ENCODE measurements at regions of chr5 and their contacts with region 1.

Region 1: GRCh38 chr5:151651997-151652645 is 34.6 kb downstream of the SPARC start:
- DNase-seq: peak; percentile 60 to 87
- H3K4me3 ChIP-seq: no peak overlapping the region
- H3K27ac ChIP-seq: no peak overlapping the region
- H3K4me1 ChIP-seq: no peaks in the 10 kb centered on the region; a peak in 1 of 7 replicates
- H3K27me3 ChIP-seq: no peaks in the 10 kb centered on the region
- CTCF ChIP-seq: peak; percentile 93 to 98 (median 97)
- EP300 ChIP-seq: no peak
- POLR2A ChIP-seq: no peak
- RAD21 ChIP-seq: peak; percentile 99 to 100

Region 2: DNA sequence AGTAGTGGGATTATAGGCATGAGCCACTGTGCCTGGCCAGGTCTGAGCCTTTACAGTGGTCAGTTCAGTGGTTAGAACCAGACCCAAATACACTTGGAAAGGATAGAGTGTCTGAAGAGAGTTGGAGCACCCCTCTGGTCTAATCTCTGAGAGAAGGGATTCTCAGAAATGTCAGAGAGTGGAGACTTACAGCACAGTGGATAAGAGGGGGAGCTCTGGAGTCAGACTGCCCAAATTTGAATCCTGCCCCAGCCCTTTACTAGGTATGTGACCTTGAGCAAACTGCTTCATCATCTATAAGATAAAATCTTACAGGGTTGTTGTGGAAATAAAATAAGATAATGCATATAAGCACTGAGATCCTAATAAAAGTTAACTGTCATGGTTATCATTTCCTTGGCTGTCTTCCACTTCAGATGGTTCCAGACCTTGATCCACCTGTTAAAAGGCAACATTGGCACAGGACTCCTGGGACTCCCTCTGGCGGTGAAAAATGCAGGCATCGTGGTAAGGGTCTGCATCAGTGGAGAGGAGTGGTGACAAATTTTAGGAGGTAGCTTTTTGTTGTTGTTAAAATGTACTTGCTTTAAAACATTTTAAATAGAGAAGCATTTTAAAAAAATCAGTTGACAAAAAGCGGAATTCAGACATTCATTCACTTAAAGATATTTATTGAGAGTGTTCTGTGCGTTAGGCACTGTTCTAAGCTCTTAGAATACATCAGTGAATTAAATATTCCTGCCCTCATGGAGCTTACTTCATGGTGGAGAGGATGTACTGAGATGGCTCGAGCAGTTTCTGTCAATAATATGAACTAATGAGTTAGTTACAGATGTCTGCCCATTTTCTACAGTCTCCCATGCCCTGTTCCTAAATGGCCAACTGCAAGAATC is 188.7 kb before region 1 on chr5:
- CTCF ChIA-PET with region 1: interaction called, 17 read pairs
- POLR2A ChIA-PET with region 1: no interaction called
- DNase-seq: peak in 1 of 2 experiments; percentile 83
- H3K4me3 ChIP-seq: no peak overlapping the region
- H3K27ac ChIP-seq: no peak overlapping the region
- H3K4me1 ChIP-seq: no peaks in the 10 kb centered on the region
- H3K27me3 ChIP-seq: no peaks in the 10 kb centered on the region
- CTCF ChIP-seq: peak; percentile 81 to 85 (median 82)
- EP300 ChIP-seq: no peak
- POLR2A ChIP-seq: no peak
- RAD21 ChIP-seq: peak; percentile 53 to 76

Region 3: GRCh38 chr5:151509231-151509630 is 142.9 kb before region 1 on chr5:
- CTCF ChIA-PET with region 1: interaction called, 21 read pairs
- POLR2A ChIA-PET with region 1: no interaction called
- DNase-seq: no peak
- H3K4me3 ChIP-seq: no peak overlapping the region
- H3K27ac ChIP-seq: no peak overlapping the region
- H3K4me1 ChIP-seq: no peaks in the 10 kb centered on the region; a peak in 1 of 7 replicates
- H3K27me3 ChIP-seq: no peaks in the 10 kb centered on the region
- CTCF ChIP-seq: no peak
- EP300 ChIP-seq: no peak
- POLR2A ChIP-seq: no peak
- RAD21 ChIP-seq: no peak

Region 4: DNA sequence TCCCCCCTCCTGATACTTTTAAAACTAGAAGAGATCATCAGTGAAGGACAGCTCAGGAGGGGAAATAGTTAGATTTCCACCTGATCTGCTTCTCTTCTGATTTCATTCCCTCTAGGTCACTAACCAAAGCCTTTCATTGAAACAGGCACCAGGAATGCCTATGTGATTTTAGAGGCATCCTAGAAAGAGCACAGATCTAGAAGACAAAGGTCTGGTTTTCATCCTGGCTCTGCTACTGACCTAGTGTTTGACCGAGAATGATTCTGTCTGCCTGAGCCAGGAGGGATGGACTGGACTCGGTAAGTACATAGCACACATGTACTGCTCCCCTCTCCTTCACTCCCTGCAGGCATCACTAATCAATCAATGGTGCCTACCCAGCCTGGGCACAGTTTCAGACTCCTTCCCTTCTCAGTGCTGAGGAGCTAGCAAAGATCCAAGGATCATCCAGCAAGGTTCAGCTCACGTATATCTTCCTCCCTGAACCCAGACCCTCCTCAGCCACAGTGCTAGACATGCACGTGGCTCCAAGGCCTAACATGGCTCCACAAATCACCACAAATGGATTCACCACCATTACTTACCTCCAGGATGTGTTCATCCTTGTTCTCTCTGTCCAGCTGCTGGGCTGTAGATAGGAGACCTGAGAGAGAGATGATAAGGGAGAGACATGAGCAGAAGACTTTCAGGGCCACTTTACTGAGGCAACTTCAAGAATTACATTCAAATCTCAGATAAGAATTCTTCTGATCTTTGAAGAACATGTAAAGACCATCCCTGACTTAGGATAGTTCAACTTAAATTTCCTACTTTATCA is 96.2 kb before region 1 on chr5:
- CTCF ChIA-PET with region 1: interaction called, 18 read pairs
- POLR2A ChIA-PET with region 1: no interaction called
- DNase-seq: no peak
- H3K4me3 ChIP-seq: no peak overlapping the region
- H3K27ac ChIP-seq: no peak overlapping the region
- H3K4me1 ChIP-seq: no peaks in the 10 kb centered on the region
- H3K27me3 ChIP-seq: no peaks in the 10 kb centered on the region
- CTCF ChIP-seq: no peak
- EP300 ChIP-seq: no peak
- POLR2A ChIP-seq: no peak
- RAD21 ChIP-seq: no peak

Region 5: DNA sequence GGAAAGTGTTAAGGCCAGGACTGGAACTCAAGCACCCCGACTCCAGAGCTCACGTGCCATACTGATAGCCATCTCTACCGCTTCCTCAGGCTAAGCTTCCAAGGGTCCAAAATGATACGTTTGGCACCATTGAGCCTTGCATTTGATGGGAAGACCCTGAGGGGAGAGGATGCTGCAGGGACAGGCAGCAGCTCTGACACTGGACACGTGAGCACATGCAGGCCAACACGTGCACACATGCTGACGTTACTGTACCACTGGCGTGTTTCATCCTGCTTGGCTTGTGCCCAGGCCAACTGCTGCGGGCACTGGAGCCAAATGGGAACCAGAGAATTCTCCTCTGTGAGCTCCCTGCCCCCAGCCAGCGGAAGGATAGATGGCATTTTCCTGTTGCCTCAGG is 66.2 kb before region 1 on chr5:
- CTCF ChIA-PET with region 1: interaction called, 12 read pairs
- POLR2A ChIA-PET with region 1: no interaction called
- DNase-seq: no peak
- H3K4me3 ChIP-seq: no peak overlapping the region
- H3K27ac ChIP-seq: no peak overlapping the region
- H3K4me1 ChIP-seq: peaks cover 0 to 5% (median 3%) of the 10 kb centered on the region in 4 experiments; a peak in 6 of 7 replicates
- H3K27me3 ChIP-seq: no peaks in the 10 kb centered on the region; a peak in 2 of 7 replicates
- CTCF ChIP-seq: no peak
- EP300 ChIP-seq: no peak
- POLR2A ChIP-seq: no peak
- RAD21 ChIP-seq: no peak

Region 6: GRCh38 chr5:151619796-151620460 is 32.2 kb before region 1 on chr5:
- CTCF ChIA-PET with region 1: interaction called, 32 read pairs
- POLR2A ChIA-PET with region 1: no interaction called
- DNase-seq: peak; percentile 60 to 69
- H3K4me3 ChIP-seq: no peak overlapping the region; a peak in 1 of 8 replicates
- H3K27ac ChIP-seq: no peak overlapping the region
- H3K4me1 ChIP-seq: peaks cover 4 to 10% (median 9%) of the 10 kb centered on the region in 4 experiments
- H3K27me3 ChIP-seq: no peaks in the 10 kb centered on the region
- CTCF ChIP-seq: no peak
- EP300 ChIP-seq: peak in 1 of 2 experiments; percentile 19; a peak in 1 of 3 replicates
- POLR2A ChIP-seq: no peak
- RAD21 ChIP-seq: no peak

Region 7: GRCh38 chr5:151675611-151676313 is 23.6 kb after region 1 on chr5:
- CTCF ChIA-PET with region 1: interaction called, 23 read pairs
- POLR2A ChIA-PET with region 1: no interaction called
- DNase-seq: no peak
- H3K4me3 ChIP-seq: no peak overlapping the region
- H3K27ac ChIP-seq: no peak overlapping the region
- H3K4me1 ChIP-seq: peaks cover 3 to 18% (median 10%) of the 10 kb centered on the region in 4 experiments; a peak in 5 of 7 replicates
- H3K27me3 ChIP-seq: no peaks in the 10 kb centered on the region
- CTCF ChIP-seq: no peak
- EP300 ChIP-seq: no peak
- POLR2A ChIP-seq: no peak
- RAD21 ChIP-seq: no peak

Region 8: DNA sequence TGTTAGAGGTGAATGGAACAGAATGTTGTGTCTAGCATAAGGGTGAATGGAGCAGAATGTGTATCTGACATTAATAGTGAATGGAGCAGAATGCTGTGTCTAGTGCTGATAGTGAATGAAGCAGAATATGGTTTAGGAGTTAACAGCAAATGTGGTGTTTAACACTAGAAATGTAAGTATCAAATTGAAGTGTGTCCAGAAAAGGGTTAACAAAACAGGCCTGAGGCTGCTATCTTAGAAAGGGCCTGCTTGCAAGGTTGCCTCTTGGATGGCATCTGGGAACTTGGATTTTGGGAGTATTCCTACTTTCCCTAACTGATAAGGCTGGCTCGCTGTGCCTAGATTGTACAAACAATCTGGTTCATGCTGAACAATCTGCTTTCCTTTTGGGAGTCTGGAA is 195.8 kb after region 1 on chr5:
- CTCF ChIA-PET with region 1: no interaction called
- POLR2A ChIA-PET with region 1: no interaction called
- DNase-seq: no peak
- H3K4me3 ChIP-seq: no peak overlapping the region
- H3K27ac ChIP-seq: no peak overlapping the region
- H3K4me1 ChIP-seq: no peaks in the 10 kb centered on the region
- H3K27me3 ChIP-seq: no peaks in the 10 kb centered on the region; a peak in 1 of 7 replicates
- CTCF ChIP-seq: no peak
- EP300 ChIP-seq: no peak
- POLR2A ChIP-seq: no peak
- RAD21 ChIP-seq: no peak